SK-N-SH (cell line): ENCODE measurements at regions of chr1 and their contacts with region 1.

Region 1: GRCh38 chr1:14862114-14862771 is 263.8 kb downstream of the KAZN start:
- DNase-seq: no peak
- H3K4me3 ChIP-seq: no peak overlapping the region
- H3K27ac ChIP-seq: no peak overlapping the region
- H3K4me1 ChIP-seq: peaks cover 0 to 6% of the 10 kb centered on the region in 2 experiments; a peak in 1 of 4 replicates
- H3K27me3 ChIP-seq: no peaks in the 10 kb centered on the region
- CTCF ChIP-seq: no peak
- EP300 ChIP-seq: no peak
- RAD21 ChIP-seq: no peak

Region 2: DNA sequence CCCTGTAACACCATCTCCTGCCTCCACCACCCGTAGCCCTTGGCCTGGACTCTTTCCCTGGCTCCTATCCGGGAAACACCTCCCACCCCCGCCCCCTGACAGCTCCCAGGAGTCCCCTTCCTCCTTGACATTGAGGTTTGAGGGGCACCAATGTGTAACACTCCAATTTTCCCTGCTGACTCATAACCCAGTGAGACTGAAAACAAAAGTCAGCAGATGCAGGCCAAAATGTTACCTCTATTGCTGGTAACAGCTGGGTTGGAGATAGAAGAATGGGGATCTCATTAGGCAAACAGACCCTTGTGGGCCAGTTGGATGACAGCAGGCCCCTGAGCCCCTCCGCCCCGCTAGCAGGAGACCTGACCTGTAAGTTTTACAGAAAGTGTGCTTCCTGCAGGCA is 26.5 kb before region 1 on chr1:
- CTCF ChIA-PET with region 1: no interaction called
- POLR2A ChIA-PET with region 1: no interaction called
- DNase-seq: no peak
- H3K4me3 ChIP-seq: no peak overlapping the region
- H3K27ac ChIP-seq: no peak overlapping the region
- H3K4me1 ChIP-seq: no peaks in the 10 kb centered on the region
- H3K27me3 ChIP-seq: no peaks in the 10 kb centered on the region
- CTCF ChIP-seq: no peak
- EP300 ChIP-seq: no peak
- RAD21 ChIP-seq: no peak

Region 3: GRCh38 chr1:14850566-14850965 is 11.7 kb before region 1 on chr1:
- CTCF ChIA-PET with region 1: interaction called, 12 read pairs
- POLR2A ChIA-PET with region 1: no interaction called
- DNase-seq: no peak
- H3K4me3 ChIP-seq: no peak overlapping the region
- H3K27ac ChIP-seq: no peak overlapping the region
- H3K4me1 ChIP-seq: peaks cover 0 to 5% of the 10 kb centered on the region in 2 experiments; a peak in 1 of 4 replicates
- H3K27me3 ChIP-seq: no peaks in the 10 kb centered on the region
- CTCF ChIP-seq: no peak
- EP300 ChIP-seq: no peak
- RAD21 ChIP-seq: no peak